ENCODE measurements at regions of chr3 and their contacts with region 1.

Region 1: GRCh38 chr3:142022381-142022780 is 127.0 kb downstream of the TFDP2 start:
- DNase-seq: no peak
- ATAC-seq: peak; percentile 68; the same call in 1 of the 2 replicates
- H3K4me3 ChIP-seq: no peak overlapping the region
- H3K27ac ChIP-seq: no peak overlapping the region
- H3K4me1 ChIP-seq: peaks cover 3% of the 10 kb centered on the region; the same call in 1 of the 2 replicates
- H3K27me3 ChIP-seq: no peaks in the 10 kb centered on the region
- CTCF ChIP-seq: no peak

Region 2: GRCh38 chr3:142046320-142047020 is 24.1 kb after region 1 on chr3:
- CTCF ChIA-PET with region 1: no interaction called
- POLR2A ChIA-PET with region 1: no interaction called
- in situ Hi-C with region 1: no loop called
- intact Hi-C with region 1: no loop called
- DNase-seq: no peak
- ATAC-seq: no peak
- H3K4me3 ChIP-seq: no peak overlapping the region
- H3K27ac ChIP-seq: no peak overlapping the region
- H3K4me1 ChIP-seq: no peaks in the 10 kb centered on the region
- H3K27me3 ChIP-seq: no peaks in the 10 kb centered on the region
- CTCF ChIP-seq: no peak

Region 3: GRCh38 chr3:142106548-142106947 is 84.2 kb after region 1 on chr3:
- CTCF ChIA-PET with region 1: no interaction called
- POLR2A ChIA-PET with region 1: no interaction called
- in situ Hi-C with region 1: no loop called
- intact Hi-C with region 1: loop called (anchors 5 kb)
- DNase-seq: no peak
- ATAC-seq: no peak
- H3K4me3 ChIP-seq: no peak overlapping the region
- H3K27ac ChIP-seq: no peak overlapping the region
- H3K4me1 ChIP-seq: no peaks in the 10 kb centered on the region
- H3K27me3 ChIP-seq: no peaks in the 10 kb centered on the region
- CTCF ChIP-seq: no peak

Region 4: GRCh38 chr3:142117056-142117851 is 94.9 kb after region 1 on chr3:
- CTCF ChIA-PET with region 1: interaction called, 18 read pairs
- POLR2A ChIA-PET with region 1: no interaction called
- in situ Hi-C with region 1: no loop called
- intact Hi-C with region 1: no loop called
- DNase-seq: no peak
- ATAC-seq: peak; percentile 52
- H3K4me3 ChIP-seq: no peak overlapping the region
- H3K27ac ChIP-seq: no peak overlapping the region; the same call in 1 of the 2 replicates
- H3K4me1 ChIP-seq: peaks cover 18% of the 10 kb centered on the region
- H3K27me3 ChIP-seq: no peaks in the 10 kb centered on the region
- CTCF ChIP-seq: no peak

Region 5: GRCh38 chr3:142129516-142130171 is 107.3 kb after region 1 on chr3:
- CTCF ChIA-PET with region 1: no interaction called
- POLR2A ChIA-PET with region 1: no interaction called
- in situ Hi-C with region 1: no loop called
- intact Hi-C with region 1: no loop called
- DNase-seq: no peak
- ATAC-seq: no peak
- H3K4me3 ChIP-seq: no peak overlapping the region
- H3K27ac ChIP-seq: no peak overlapping the region
- H3K4me1 ChIP-seq: no peaks in the 10 kb centered on the region
- H3K27me3 ChIP-seq: no peaks in the 10 kb centered on the region
- CTCF ChIP-seq: peak; percentile 34; the same call in 1 of the 2 replicates